Naive thymus-derived CD4-positive, alpha-beta T cell (primary cell): ENCODE measurements at regions of chr6 and their contacts with region 1.

Region 1: DNA sequence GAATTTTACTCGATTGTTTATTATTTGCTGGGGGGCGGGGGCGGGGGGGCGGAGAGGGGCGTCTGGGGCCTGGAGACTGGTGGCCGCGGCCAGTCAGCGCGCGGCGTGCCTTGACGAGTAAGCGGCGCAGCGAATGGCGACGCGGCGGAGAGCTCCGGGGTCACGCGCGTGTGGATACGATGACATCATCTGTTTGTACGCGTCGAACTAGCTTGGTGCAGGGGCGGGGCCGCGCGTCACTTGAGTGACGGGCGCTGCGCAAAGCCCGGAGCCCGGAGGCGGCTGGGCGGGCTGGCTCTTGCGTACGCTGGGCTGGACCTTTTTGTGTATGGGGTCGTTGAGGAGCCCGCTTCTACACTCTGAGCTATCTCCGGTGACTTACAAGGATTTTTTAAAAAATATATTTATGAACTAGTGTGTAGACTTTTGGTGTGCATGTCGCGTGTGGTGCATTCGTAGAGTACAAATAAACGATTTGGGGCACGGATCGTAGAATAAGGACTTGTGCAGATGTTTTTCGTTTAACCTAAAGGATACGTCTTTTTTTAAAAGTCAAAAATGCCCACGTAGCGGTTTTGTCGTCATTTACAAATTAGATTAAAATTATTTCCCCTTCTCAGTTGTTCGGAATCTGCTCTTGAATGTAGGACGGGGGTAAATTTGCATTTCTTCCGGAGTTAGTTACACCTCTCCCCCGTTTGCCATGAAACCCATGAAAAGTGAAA is 2.2 kb upstream of the FOXO3 start:
- DNase-seq: peak; percentile 91 to 98 (median 97)
- ATAC-seq: peak; percentile 75
- H3K4me3 ChIP-seq: peak overlapping the region; percentile 75
- H3K4me3 Mint-ChIP-seq: peak overlapping the region; percentile 88 to 98 (median 97)
- H3K27ac ChIP-seq: peak overlapping the region; percentile 100
- H3K27ac Mint-ChIP-seq: peak overlapping the region; percentile 87 to 99 (median 97)
- H3K4me1 ChIP-seq: peaks cover 12 to 13% of the 10 kb centered on the region in 2 donors
- H3K4me1 Mint-ChIP-seq: peaks cover 16 to 28% (median 20%) of the 10 kb centered on the region in 7 donors
- H3K27me3 ChIP-seq: no peaks in the 10 kb centered on the region
- H3K27me3 Mint-ChIP-seq: peaks cover 0 to 55% (median 6%) of the 10 kb centered on the region in 5 donors

Region 2: DNA sequence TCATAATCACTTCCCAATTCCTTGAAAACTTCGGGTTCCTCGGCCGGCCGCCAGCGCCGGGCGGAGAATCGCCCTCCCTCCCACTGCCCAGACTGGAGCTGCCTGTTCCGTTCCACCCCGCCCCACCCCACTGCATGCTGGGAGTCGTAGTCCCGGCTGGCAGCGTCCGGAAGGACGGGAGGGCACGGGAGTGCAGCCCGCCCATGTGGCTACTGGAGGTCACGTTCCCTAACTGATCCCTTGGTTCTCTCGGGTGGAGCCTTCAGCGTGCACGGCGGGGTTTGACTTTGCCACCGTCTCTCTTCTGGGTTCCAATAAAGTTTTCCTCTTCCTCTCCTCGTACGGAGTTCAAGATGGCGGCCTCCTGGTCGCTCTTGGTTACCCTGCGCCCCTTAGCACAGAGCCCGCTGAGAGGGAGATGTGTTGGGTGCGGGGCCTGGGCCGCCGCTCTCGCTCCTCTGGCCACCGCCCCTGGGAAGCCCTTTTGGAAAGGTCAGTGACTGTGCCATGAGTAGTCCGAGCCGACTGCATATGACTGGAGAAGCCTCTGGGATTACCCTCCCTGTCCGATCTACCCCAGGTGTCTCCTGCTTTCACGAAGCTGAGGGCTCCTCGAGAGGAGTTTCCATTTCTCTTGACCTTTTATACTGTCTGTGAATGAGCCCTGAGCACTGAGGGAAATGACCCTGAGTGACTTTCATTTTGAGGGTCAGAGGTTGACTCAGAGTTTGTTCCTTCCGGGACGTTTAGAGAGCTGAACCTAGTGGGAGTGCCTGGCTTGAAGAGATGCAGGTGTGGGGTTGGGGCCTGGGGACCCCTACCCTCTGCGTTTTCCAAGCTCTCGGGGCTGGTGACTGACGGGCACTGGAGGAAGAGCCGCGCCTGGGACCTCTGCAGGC is 263.6 kb before region 1 on chr6 and contains the start of gene AFG1L:
- CTCF ChIA-PET with region 1: no interaction called
- POLR2A ChIA-PET with region 1: no interaction called
- intact Hi-C with region 1: loop called in 1 of 2 experiments (anchors 1 kb)
- DNase-seq: peak; percentile 81 to 90 (median 88)
- ATAC-seq: peak; percentile 96
- H3K4me3 ChIP-seq: peak within 1 kb of the TSS; percentile 99
- H3K4me3 Mint-ChIP-seq: peak within 1 kb of the TSS; percentile 93 to 99 (median 98)
- H3K27ac ChIP-seq: peak within 1 kb of the TSS; percentile 88
- H3K27ac Mint-ChIP-seq: peak within 1 kb of the TSS; percentile 95 to 100 (median 99)
- H3K4me1 ChIP-seq: peaks cover 10 to 13% of the 10 kb centered on the region in 2 donors
- H3K4me1 Mint-ChIP-seq: peaks cover 11 to 37% (median 26%) of the 10 kb centered on the region in 7 donors
- H3K27me3 ChIP-seq: no peaks in the 10 kb centered on the region
- H3K27me3 Mint-ChIP-seq: peaks cover 0 to 3% (median 0%) of the 10 kb centered on the region in 5 donors
- total RNA-seq, gene AFG1L: 4.1 to 9.2 (median 7.2) TPM

Region 3: DNA sequence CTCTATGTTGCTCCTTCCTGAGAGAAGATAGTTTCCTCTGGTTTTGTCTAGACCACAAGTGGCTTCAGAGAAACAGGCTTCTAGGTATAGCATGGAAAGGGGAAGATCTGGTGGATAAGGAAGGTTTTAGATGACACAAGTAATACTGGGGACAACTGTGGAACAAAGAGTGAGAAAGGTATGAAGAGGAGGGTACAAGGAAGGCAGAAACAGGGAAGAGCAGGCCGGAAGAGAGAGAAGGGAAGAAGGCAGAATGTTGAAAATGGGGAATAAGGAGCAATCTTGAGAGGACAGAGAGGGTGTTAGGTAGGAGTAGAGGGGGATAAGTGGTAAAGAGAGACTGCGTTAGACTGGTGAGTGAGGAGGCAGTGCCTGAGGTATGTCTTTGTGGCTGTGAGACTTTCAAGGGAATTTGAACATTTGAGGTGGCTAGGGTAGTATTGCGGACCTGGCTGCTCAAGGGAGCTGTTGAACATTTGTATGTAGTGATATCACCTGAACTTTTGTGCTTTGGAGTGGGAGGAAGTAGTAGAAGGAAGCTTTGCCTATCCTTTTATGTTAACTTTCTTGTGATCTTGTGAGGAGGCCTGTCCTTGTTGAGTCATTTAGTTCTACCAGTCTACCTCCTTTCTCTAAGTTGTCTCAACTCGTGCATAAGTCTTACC is 71.6 kb after region 1 on chr6:
- CTCF ChIA-PET with region 1: no interaction called
- POLR2A ChIA-PET with region 1: no interaction called
- intact Hi-C with region 1: loop called in 1 of 2 experiments (anchors 1 kb)
- DNase-seq: peak in 7 of 9 donors; percentile 32 to 61 (median 44)
- ATAC-seq: peak; percentile 74
- H3K4me3 ChIP-seq: no peak overlapping the region
- H3K4me3 Mint-ChIP-seq: peak overlapping the region; percentile 1 to 81 (median 52)
- H3K27ac ChIP-seq: no peak overlapping the region
- H3K27ac Mint-ChIP-seq: peak overlapping the region in 5 of 9 donors; percentile 2 to 66 (median 34)
- H3K4me1 ChIP-seq: peaks cover 14 to 17% of the 10 kb centered on the region in 2 donors
- H3K4me1 Mint-ChIP-seq: peaks cover 30 to 90% (median 84%) of the 10 kb centered on the region in 7 donors
- H3K27me3 ChIP-seq: no peaks in the 10 kb centered on the region
- H3K27me3 Mint-ChIP-seq: no peaks in the 10 kb centered on the region

Region 4: DNA sequence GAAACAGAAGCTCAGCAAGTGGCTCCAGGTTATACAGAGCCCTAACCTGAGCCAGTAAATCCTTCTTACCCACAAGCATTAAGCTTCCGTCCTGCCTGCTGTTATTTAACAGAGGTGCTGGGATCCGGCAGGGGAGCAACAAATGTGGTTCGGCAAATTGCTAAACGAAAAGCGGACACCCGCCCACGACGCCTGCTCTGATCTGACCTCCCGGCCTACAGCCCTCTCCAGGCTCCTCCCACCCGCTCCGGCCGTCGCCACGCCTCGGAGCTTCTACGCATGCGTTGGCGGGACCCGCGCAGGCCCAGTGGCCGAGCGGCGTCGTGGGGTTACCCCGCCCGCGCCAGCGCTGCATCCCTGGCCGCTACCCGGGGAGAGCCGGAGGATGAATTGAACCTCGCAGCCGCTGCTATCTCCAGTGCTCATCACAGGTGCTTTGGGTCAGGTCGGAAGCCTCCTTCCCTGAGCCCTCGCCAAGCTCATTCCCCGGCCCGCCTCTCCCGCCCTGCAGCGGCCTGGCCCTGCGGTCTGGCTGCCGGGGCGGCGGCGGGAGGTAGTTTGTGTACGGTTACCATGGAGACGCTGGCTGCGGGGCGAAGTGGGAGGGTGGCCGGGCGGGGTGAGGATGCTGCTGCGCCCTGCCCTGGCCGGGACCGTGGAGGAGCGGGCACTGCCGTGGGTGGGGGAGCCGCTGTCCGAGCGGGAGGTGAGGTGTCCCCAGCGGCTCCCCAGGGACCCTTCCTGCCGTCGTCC is 289.8 kb after region 1 on chr6 and contains the start of gene ARMC2:
- CTCF ChIA-PET with region 1: no interaction called
- POLR2A ChIA-PET with region 1: interaction called, 9 read pairs
- intact Hi-C with region 1: loop called (anchors 1 kb)
- DNase-seq: peak; percentile 72 to 95 (median 79)
- ATAC-seq: peak; percentile 94
- H3K4me3 ChIP-seq: peak within 1 kb of the TSS; percentile 90
- H3K4me3 Mint-ChIP-seq: peak within 1 kb of the TSS; percentile 75 to 93 (median 88)
- H3K27ac ChIP-seq: peak within 1 kb of the TSS; percentile 69
- H3K27ac Mint-ChIP-seq: peak within 1 kb of the TSS; percentile 72 to 93 (median 85)
- H3K4me1 ChIP-seq: peaks cover 6 to 13% of the 10 kb centered on the region in 2 donors
- H3K4me1 Mint-ChIP-seq: peaks cover 11 to 39% (median 29%) of the 10 kb centered on the region in 7 donors
- H3K27me3 ChIP-seq: no peaks in the 10 kb centered on the region
- H3K27me3 Mint-ChIP-seq: peaks cover 0 to 36% (median 0%) of the 10 kb centered on the region in 5 donors
- total RNA-seq, gene ARMC2: 6.2 to 12.7 (median 7.9) TPM

Region 5: DNA sequence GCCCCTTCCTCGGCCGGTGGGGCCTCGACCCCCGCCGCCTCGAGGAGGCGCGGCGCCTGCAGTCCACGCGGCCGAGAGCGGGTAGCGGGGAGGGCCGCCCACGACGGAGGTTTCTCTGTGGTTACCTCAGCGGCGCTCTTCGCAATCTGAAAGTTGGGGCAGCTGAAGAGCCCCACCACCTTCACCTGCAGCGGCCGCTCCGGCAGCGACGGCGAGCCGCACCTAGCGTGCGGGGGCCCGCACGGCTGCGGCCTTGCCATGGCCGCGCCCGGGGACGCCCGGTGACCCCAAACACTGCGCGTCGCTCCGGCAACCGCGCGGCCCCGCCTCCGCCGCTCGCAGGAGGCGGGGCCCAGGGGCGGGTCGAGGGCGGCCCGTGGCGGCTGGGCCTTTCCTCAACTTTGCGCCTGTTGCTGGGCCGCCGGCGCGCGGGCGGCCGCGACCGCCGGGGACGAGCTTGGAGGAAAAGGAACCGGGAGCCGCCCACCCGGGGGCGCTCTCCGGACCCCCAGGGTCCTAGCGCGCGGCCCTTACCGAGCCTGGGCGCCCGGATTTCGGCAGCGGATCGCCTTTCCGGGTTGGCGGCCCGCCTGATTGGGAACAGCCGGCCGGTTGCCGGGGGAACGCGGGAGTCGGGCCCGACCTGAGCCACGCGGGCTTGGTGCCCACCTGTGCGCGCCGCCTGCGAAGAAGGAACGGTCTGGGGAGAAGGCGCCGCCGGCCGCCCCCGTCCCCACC is 882.0 kb after region 1 on chr6 and contains the starts of genes PPIL6 and SMPD2:
- CTCF ChIA-PET with region 1: no interaction called
- POLR2A ChIA-PET with region 1: no interaction called
- intact Hi-C with region 1: loop called (anchors 1 to 2 kb)
- DNase-seq: peak; percentile 63 to 85 (median 77)
- ATAC-seq: peak; percentile 91
- H3K4me3 ChIP-seq: peak within 1 kb of the TSS; percentile 65
- H3K4me3 Mint-ChIP-seq: peak within 1 kb of the TSS; percentile 90 to 95 (median 94)
- H3K27ac ChIP-seq: peak within 1 kb of the TSS; percentile 98
- H3K27ac Mint-ChIP-seq: peak within 1 kb of the TSS; percentile 87 to 97 (median 93)
- H3K4me1 ChIP-seq: peaks cover 11% of the 10 kb centered on the region in 2 donors
- H3K4me1 Mint-ChIP-seq: peaks cover 10 to 32% (median 21%) of the 10 kb centered on the region in 7 donors
- H3K27me3 ChIP-seq: no peaks in the 10 kb centered on the region
- H3K27me3 Mint-ChIP-seq: peaks cover 0 to 2% (median 0%) of the 10 kb centered on the region in 5 donors
- total RNA-seq, gene PPIL6: 0.13 to 1.9 (median 0.40) TPM in 4 of 5 experiments, not detected in the other
- total RNA-seq, gene SMPD2: 16.9 to 33.7 (median 19.6) TPM

Region 6: GRCh38 chr6:109482905-109483735 is 924.6 kb after region 1 on chr6 and contains the start of gene ZBTB24:
- CTCF ChIA-PET with region 1: no interaction called
- POLR2A ChIA-PET with region 1: interaction called, 5 read pairs
- intact Hi-C with region 1: loop called (anchors 1 to 2 kb)
- DNase-seq: peak; percentile 86 to 92 (median 89)
- ATAC-seq: peak; percentile 94
- H3K4me3 ChIP-seq: peak within 1 kb of the TSS; percentile 79
- H3K4me3 Mint-ChIP-seq: peak within 1 kb of the TSS; percentile 92 to 99 (median 97)
- H3K27ac ChIP-seq: peak within 1 kb of the TSS; percentile 84
- H3K27ac Mint-ChIP-seq: peak within 1 kb of the TSS; percentile 42 to 95 (median 91)
- H3K4me1 ChIP-seq: peaks cover 38 to 39% of the 10 kb centered on the region in 2 donors
- H3K4me1 Mint-ChIP-seq: peaks cover 38 to 55% (median 51%) of the 10 kb centered on the region in 7 donors
- H3K27me3 ChIP-seq: no peaks in the 10 kb centered on the region
- H3K27me3 Mint-ChIP-seq: peaks cover 0 to 7% (median 0%) of the 10 kb centered on the region in 5 donors
- total RNA-seq, gene ZBTB24: 10.2 to 26.6 (median 23.4) TPM